ENCODE measurements at regions of chr12 and their contacts with region 1.

Region 1: DNA sequence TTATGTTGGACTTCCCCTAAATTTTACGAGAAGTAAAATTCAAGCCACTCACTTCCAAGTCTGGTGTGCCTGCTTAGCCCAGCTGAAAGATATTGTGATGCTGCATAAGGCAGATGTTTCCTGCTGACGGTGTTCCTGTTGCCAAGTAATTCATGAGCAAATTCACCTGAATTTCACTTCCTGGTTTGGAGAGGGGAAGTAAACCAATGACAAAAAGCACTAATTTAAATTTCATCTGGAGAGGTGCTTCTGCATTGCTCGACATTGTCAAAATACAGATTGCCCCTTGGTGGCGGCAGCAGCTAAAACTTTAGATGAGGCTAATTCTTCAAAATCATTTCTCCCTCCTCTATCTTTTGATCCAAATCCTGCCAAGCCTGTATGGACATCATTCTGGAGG is 281.1 kb downstream of the AACS start:
- DNase-seq: peak; percentile 85 to 96 (median 90)
- H3K4me3 ChIP-seq: no peak overlapping the region
- H3K27ac ChIP-seq: no peak overlapping the region
- H3K4me1 ChIP-seq: peaks cover 0 to 10% (median 2%) of the 10 kb centered on the region in 4 experiments
- H3K27me3 ChIP-seq: peaks cover 0 to 4% (median 0%) of the 10 kb centered on the region in 5 experiments

Region 2: DNA sequence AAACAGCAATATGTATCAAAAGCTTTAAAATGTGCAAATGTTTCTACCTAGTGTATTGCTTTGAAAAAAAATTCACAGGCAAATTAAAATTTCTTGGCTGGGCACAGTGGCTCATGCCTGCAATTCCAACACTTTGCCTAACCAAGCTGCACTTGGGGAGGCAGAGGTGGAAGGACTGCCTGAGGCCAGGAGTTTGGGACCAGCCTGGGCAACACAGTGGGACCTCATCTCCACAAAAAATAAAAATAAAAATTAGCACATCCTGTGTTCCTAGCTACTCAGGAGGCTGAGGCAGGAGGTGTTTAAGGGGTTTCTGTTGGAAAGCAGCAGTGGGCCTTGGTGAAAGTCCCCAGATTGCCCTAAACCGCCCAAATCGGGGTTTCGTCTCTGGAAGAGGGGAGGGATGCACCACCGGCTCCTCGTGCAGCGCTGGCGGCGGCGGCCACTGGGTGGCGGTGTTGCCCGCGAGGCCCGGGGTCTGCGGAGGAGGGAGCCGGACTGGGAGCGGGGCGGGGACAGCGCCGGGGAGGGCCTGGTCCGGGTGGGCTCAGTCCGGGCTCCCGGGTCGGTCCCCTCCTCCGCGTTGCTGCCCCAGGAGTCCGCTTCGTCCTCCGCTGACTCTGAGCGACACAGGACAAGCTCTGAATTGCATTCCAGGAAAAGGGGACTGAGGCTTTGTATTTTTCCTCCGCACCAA is 15.6 kb before region 1 on chr12:
- CTCF ChIA-PET with region 1: interaction called, 10 read pairs
- POLR2A ChIA-PET with region 1: no interaction called
- DNase-seq: peak; percentile 36 to 52 (median 47)
- H3K4me3 ChIP-seq: peak overlapping the region in 3 of 7 experiments; percentile 34 to 65 (median 64)
- H3K27ac ChIP-seq: no peak overlapping the region
- H3K4me1 ChIP-seq: peaks cover 0 to 5% (median 2%) of the 10 kb centered on the region in 4 experiments
- H3K27me3 ChIP-seq: peaks cover 3 to 62% (median 8%) of the 10 kb centered on the region in 5 experiments